Panc1 (cell line): ENCODE measurements at regions of chr3 and their contacts with region 1.

Region 1: GRCh38 chr3:159200176-159200575 is 398.3 kb downstream of the MFSD1 start:
- DNase-seq: no peak
- ATAC-seq: no peak
- H3K4me3 ChIP-seq: no peak overlapping the region
- H3K27ac ChIP-seq: no peak overlapping the region
- H3K4me1 ChIP-seq: no peaks in the 10 kb centered on the region
- H3K27me3 ChIP-seq: no peaks in the 10 kb centered on the region
- CTCF ChIP-seq: no peak

Region 2: DNA sequence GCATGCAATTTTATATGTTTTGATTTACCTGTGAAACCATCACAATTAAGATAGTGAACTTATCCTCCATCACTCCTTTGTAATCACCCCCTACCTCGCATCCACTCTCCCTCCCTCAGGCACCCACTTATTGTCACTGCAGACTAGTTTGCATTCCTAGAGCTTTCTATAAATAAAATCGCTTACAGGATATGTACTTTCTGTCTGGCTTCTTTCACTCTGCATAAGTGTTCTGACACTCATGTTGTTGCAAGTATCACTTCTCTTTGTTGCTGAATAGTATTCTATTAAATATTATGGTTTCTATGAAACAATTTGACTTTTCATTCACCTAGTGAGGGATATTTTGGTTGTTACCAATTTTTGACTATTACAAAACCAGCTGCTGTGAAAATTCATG is 951.0 kb before region 1 on chr3:
- CTCF ChIA-PET with region 1: no interaction called
- POLR2A ChIA-PET with region 1: no interaction called
- in situ Hi-C with region 1: no loop called
- intact Hi-C with region 1: no loop called
- DNase-seq: no peak
- ATAC-seq: no peak
- H3K4me3 ChIP-seq: no peak overlapping the region
- H3K27ac ChIP-seq: no peak overlapping the region
- H3K4me1 ChIP-seq: no peaks in the 10 kb centered on the region
- H3K27me3 ChIP-seq: no peaks in the 10 kb centered on the region
- CTCF ChIP-seq: no peak

Region 3: GRCh38 chr3:158976966-158977365 is 223.2 kb before region 1 on chr3:
- CTCF ChIA-PET with region 1: no interaction called
- POLR2A ChIA-PET with region 1: interaction called, 11 read pairs
- in situ Hi-C with region 1: no loop called
- intact Hi-C with region 1: no loop called
- DNase-seq: no peak
- ATAC-seq: no peak
- H3K4me3 ChIP-seq: no peak overlapping the region
- H3K27ac ChIP-seq: no peak overlapping the region
- H3K4me1 ChIP-seq: no peaks in the 10 kb centered on the region
- H3K27me3 ChIP-seq: no peaks in the 10 kb centered on the region; the same call in 1 of the 2 replicates
- CTCF ChIP-seq: no peak